ENCODE measurements at regions of chr16 and their contacts with region 1.

Region 1: DNA sequence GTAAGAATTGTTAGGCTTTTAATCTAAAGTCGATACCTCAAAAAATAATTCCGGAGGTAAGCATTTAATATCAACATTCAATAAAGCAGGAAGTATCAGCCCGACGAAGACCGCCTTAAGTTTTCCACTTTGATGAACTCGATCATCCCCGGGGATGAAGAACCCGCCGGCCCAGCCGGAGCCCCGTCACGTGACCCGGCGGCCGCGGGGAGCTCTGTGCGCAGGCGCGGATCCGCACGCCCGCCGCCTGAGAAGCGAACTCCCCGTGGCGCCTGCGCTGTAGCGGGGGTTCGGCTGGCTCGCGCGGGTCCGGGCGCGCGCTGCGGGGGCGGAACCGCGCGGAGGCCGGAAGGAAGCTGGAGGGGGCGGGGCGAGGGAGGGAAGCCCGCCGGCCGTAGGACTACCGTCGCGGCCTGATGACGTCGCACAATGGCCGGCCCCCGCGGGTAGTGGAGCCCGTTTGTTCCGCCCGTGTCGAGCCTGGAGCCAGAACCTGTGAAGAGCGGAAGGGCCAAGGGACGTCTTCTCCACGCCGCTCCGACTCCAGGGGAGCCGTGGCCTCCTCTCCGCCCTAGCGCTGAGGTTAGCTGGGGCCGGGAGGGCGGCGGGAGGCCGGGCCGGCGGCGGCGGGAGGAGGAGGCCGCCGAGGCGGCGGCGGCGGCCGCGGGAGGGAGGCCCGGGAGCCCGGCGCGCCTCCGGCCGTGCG is at the start of gene ZC3H18:
- DNase-seq: peak; percentile 94
- ATAC-seq: peak; percentile 91
- H3K4me3 ChIP-seq: peak within 1 kb of the TSS; percentile 76
- H3K27ac ChIP-seq: no peak within 1 kb of the TSS
- H3K4me1 ChIP-seq: peaks cover 15% of the 10 kb centered on the region
- H3K27me3 ChIP-seq: no peaks in the 10 kb centered on the region
- CTCF ChIP-seq: no peak
- total RNA-seq, gene ZC3H18: 11.8 and 24.5 TPM in 2 replicates

Region 2: DNA sequence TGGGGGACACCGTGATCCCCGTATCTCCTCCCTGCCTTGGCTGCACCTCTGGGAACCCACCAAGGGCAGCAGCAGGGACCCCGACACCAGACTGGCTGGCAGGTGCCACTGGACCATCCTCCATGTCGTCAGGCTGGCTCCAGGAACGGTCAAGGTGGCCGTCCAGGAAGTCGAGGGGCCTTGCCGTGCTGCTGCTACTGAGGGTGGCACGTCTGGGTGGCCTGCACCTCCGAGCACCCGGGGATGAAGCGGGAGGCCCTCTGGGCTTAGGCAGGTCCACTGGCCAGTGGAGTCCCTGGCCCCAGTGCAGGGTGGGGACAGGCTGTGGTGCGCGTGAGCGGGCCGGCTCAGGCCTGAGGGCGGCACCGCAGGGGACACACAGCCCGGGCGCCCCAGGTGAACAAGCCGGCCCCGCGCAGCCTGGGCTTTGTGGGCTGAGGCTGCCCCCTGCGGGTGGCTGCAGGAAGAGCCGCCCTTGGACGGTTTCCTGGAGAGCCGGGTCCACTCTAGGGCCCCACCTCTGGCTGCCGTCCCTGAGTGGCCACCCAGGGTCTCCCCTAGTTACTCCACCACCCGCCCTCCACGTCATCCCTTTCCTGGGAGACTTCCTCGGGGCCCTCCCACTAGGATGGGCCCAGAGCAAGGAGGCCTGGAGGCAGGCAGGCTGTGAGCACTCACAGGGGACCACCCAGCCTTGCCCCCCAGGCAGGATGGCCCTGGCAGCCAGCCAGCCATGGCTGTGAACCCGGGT is 42.8 kb before region 1 on chr16:
- CTCF ChIA-PET with region 1: no interaction called
- POLR2A ChIA-PET with region 1: no interaction called
- intact Hi-C with region 1: no loop called
- DNase-seq: peak; percentile 21
- ATAC-seq: peak; percentile 40; the same call in 1 of the 2 replicates
- H3K4me3 ChIP-seq: no peak overlapping the region
- H3K27ac ChIP-seq: no peak overlapping the region
- H3K4me1 ChIP-seq: no peaks in the 10 kb centered on the region
- H3K27me3 ChIP-seq: no peaks in the 10 kb centered on the region
- CTCF ChIP-seq: peak; percentile 64

Region 3: GRCh38 chr16:88585269-88585668 is 15.1 kb after region 1 on chr16:
- CTCF ChIA-PET with region 1: no interaction called
- POLR2A ChIA-PET with region 1: interaction called, 14 read pairs
- intact Hi-C with region 1: no loop called
- DNase-seq: no peak
- ATAC-seq: no peak
- H3K4me3 ChIP-seq: no peak overlapping the region
- H3K27ac ChIP-seq: no peak overlapping the region
- H3K4me1 ChIP-seq: no peaks in the 10 kb centered on the region
- H3K27me3 ChIP-seq: no peaks in the 10 kb centered on the region
- CTCF ChIP-seq: no peak